Posterior vena cava (tissue), 2 donors: ENCODE measurements at regions of chr11 and their contacts with region 1.

Region 1: GRCh38 chr11:75582895-75583717 is 21.1 kb downstream of the SERPINH1 start:
- DNase-seq: peak; percentile 91

Region 2: GRCh38 chr11:74520927-74521665 is 1062.0 kb before region 1 on chr11:
- intact Hi-C with region 1: loop called in 1 of 2 experiments (anchors 10 kb)
- DNase-seq: no peak